Keratinocyte (primary cell): ENCODE measurements at regions of chr10 and their contacts with region 1.

Region 1: DNA sequence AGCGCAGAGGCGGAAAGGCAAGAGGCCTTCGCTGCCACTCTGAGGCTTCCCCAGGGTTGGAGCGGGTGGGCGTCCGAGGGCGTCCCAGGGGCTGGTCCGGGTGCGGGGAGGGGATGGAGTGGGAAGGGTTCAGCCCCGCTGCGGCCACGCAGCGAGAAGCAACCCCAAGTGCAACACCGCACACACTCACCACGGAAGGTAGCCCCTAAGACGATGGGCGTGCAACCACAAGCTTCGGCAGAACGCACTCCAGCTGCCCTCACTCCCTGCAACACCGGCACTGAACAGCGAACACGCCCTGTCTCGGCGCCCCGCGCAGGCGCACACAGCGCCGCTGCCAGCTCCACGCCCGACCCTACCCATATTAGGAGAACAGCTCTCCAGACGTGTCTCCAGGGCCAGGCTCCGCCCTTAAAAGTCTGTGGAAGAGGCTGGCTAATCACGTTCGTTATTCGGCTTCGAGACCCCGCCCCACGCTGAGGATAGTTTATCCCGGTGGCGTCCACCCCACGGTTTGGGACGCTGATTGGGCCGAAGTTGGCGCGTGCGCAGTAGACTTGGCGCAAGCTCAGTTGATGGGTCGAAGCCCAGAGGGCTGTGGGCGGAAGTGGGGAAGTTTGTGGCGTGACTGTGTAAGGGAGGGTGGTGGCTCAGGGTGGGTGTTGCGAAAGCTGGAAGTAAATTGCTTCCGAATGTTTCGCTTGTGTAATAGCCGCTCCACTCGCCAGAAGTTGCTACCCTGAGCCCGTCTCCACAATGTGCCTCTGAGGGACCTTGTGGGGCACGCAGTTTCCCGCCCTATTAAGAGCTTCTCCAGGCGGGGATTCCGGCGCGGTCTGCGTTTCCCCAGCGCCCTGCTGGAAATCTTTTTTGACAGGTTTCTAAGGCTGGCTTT is at the start of gene RSU1:
- DNase-seq: peak; percentile 99
- H3K4me3 ChIP-seq: peak within 1 kb of the TSS; percentile 86 to 95 (median 88)
- H3K27ac ChIP-seq: peak within 1 kb of the TSS; percentile 84
- H3K4me1 ChIP-seq: peaks cover 15% of the 10 kb centered on the region
- H3K27me3 ChIP-seq: no peaks in the 10 kb centered on the region
- CTCF ChIP-seq: no peak
- polyA plus RNA-seq, gene RSU1: 125 to 144 TPM (median 133 TPM) in 3 replicates

Region 2: DNA sequence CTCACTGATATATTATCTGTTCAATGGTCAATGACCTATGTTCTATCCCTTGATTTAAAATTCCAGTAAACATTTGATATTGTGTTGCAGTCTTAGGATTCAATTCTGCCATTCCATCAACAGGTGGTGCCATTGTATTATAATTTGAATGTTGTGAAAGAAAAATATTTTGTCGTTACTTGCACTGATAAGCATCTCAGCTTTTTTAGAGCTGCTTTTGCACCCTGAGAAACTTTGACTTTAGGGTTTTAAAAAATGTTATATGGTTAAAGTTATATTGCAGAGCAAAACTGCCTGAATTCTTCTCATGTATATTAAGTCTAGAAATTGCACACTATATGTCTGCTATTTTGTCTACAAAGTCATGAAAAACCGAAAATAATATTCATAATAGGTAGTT is 938.3 kb before region 1 on chr10:
- dilution Hi-C with region 1: loop called (anchors 25 kb)
- DNase-seq: no peak
- H3K4me3 ChIP-seq: no peak overlapping the region
- H3K27ac ChIP-seq: no peak overlapping the region
- H3K4me1 ChIP-seq: no peaks in the 10 kb centered on the region
- H3K27me3 ChIP-seq: no peaks in the 10 kb centered on the region
- CTCF ChIP-seq: peak in 2 of 3 experiments; percentile 45 to 56

Region 3: DNA sequence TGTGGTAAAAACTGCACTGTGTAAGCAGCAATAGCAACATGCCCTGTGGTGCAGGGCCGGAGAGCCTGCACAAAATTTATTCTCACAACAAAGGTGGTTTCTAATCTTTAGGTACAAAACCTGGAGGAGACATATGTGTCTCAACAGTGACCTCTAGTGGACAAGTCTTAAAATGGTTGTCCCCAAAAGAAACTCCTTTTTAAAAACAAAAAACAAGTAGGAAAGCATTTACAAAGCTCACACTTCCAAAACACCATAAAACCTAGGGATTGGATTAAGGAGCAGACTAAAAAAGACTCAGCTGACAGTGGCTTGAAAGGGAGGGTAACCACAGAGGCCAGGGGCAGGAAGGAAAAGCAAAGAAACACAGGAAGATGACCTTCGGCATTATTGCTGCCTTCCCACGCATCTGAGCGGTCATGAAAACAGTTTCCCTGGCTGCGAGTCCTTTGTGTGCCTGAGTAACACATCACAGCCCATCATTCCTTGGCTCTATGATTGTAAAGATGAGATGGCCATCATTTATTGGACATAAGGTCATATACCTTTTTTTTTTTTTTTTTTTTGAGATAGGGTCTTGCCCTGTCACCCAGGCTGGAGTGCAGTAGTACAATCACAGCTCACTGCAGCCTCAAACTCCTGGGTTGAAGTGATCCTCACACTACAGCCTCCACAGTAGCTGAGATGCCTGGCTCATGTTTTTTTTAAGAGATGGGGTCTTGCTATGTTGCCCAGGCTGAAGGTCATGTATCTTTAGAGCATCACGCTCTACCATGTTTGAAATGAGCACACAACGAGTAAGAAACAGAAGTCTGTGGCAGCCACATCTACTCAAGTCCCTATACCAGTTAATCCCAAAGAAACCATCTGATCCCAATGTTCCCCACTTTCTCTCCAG is 39.6 kb before region 1 on chr10:
- dilution Hi-C with region 1: no loop called
- DNase-seq: peak; percentile 11
- H3K4me3 ChIP-seq: no peak overlapping the region
- H3K27ac ChIP-seq: no peak overlapping the region
- H3K4me1 ChIP-seq: peaks cover 4% of the 10 kb centered on the region
- H3K27me3 ChIP-seq: no peaks in the 10 kb centered on the region
- CTCF ChIP-seq: peak; percentile 2 to 44 (median 44)